Activated T-helper 1 cell treated with anti-CD3 and anti-CD28 coated beads, Interleukin-12 subunit alpha, Interleukin-12 subunit beta, Interleukin-2, Interleukin-4 antibody, amounts not matched to agents 30 ng/mL and 10 ng/mL and 1 ng/mL, durations not matched to agents 14 hours and 24 hours and 36 hours (primary cell): ENCODE measurements at regions of chr3 and their contacts with region 1.

Region 1: DNA sequence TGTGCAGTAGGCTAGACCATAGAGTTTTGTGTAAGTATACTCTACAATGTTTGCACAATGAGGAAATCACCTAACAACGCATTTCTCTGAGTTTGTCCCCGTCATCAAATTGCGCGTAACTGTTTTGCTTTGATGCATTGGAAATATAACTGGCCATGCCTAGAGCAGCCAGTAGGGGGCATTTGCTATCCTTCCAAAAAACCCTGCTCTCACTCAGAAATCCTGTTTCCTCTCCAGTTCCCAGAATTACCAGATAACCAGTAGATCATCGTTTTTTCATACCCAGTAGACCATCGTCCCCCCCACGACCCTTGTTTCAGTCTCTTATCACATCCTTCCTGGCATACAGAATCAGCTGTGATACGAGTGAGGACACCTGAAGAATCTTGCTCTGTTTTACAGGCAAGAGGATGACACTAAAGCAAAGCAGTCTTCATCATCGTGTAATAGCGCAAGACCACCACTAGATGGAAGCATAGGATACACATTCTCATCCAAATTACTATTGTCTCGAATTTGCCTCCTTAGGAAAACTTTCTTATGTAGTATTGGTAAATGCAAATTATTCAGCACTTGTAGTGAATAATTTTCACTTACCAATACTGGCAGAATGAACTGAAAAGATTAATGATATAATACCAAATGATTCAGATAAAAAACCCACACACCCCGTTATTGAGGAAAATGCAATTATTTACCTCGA is 4.4 kb upstream of the GABRR3 start:
- DNase-seq: peak; percentile 71
- H3K4me3 Mint-ChIP-seq: peak overlapping the region; percentile 84
- H3K27ac Mint-ChIP-seq: peak overlapping the region; percentile 90
- H3K4me1 Mint-ChIP-seq: peaks cover 22% of the 10 kb centered on the region
- H3K27me3 Mint-ChIP-seq: peaks cover 27% of the 10 kb centered on the region

Region 2: DNA sequence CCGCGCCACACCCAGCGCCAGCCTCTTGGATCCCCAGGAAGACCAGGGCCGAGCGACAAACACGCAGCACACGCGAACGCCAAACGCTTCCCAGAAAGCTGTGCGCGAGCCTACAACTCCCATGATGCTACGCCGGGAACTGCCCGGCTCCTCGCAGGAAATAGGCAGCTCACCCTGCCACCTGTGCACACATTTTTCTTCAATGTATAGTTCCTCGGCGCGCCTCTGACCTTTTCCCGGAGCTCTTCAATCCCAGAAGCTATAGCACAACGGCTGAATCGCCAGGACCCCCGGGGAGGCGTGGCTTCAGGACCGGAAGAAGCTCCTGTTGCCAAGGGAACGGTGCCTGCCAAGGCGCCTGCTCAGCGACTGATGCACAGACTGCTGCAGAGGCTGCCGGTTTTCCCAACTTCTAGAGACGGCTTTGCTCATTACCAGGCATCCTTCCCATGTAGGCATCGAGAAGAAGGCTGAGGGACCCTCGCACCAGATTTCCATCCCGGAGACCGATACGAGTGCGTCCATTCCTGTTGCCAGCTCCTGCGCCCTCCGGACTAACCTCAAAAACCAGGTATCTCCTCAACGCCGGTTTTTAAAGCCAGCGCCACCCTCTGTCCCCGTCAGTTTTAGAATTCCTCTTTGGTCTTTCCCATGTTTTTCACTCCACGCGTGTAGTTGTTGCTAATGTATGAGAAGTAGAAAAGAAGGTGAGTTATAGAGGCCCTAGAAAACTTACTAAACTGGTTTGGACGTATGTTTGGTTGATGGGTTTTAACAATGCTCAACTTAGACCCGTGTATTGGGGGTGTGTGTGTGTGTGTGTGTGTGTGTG is 274.9 kb before region 1 on chr3 and contains the start of gene ARL6:
- intact Hi-C with region 1: loop called (anchors 1 kb)
- DNase-seq: peak; percentile 66
- H3K4me3 Mint-ChIP-seq: peak within 1 kb of the TSS; percentile 96
- H3K27ac Mint-ChIP-seq: peak within 1 kb of the TSS; percentile 95
- H3K4me1 Mint-ChIP-seq: peaks cover 31% of the 10 kb centered on the region
- H3K27me3 Mint-ChIP-seq: peaks cover 3% of the 10 kb centered on the region
- total RNA-seq, gene ARL6: 5.9 and 6.2 TPM in 2 replicates

Region 3: DNA sequence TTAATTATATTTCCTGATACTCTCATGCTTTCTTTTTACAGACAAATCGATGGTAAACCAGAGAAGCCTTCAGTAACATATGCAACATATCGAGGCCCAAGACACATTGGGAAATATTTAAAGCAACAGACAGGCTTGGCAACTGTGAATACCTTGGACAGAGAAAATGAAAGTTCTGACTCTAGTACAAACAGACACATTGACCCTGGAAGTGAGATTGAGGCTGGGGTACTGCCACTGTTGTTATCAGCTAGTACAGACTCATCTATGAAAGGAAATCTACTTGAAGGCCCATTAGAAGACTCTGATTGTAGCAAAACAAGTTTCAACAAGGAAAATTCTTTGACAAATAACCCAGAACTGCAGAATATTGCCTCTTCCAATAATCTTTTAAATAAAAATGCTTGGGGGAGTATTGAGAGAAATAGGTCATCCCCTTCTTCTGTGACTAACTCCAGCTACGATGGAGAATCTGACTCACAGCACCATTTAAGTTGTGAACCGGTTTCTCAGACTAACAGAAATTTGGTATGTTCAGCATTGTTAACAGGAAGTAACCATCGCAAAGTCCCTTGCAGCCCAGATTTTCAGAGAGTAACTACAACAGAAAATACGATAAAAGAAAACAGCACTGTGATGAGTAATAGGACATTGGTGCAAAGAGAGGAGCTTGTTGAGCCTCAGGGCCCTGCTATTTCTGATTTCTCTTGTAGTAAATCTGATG is 167.5 kb before region 1 on chr3:
- intact Hi-C with region 1: loop called (anchors 1 kb)
- DNase-seq: peak; percentile 32
- H3K4me3 Mint-ChIP-seq: peak overlapping the region; percentile 59
- H3K27ac Mint-ChIP-seq: peak overlapping the region; percentile 88
- H3K4me1 Mint-ChIP-seq: peaks cover 27% of the 10 kb centered on the region
- H3K27me3 Mint-ChIP-seq: peaks cover 2% of the 10 kb centered on the region

Region 4: DNA sequence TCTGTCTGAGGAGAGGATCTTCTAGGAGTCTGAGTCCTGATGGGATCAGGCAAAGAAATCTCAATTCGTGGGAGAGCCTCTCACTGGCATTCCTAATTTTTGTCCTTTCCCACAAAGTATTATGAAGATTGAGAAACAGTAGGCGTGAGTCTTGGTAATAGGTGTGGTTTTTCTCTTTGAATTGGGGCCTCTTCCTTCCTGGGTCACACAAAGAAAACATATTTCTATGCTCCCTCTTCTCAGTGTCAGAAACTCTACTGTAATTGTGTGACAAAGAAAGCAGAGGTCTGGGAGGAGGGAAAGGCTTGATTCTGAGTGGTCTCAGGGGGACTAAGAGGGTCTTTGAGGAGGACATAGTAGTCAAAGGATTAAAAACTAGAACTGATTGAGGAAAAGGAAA is 10.4 kb before region 1 on chr3:
- intact Hi-C with region 1: loop called (anchors 1 kb)
- DNase-seq: no peak
- H3K4me3 Mint-ChIP-seq: peak overlapping the region; percentile 51
- H3K27ac Mint-ChIP-seq: peak overlapping the region; percentile 86
- H3K4me1 Mint-ChIP-seq: peaks cover 37% of the 10 kb centered on the region
- H3K27me3 Mint-ChIP-seq: peaks cover 2% of the 10 kb centered on the region

Region 5: DNA sequence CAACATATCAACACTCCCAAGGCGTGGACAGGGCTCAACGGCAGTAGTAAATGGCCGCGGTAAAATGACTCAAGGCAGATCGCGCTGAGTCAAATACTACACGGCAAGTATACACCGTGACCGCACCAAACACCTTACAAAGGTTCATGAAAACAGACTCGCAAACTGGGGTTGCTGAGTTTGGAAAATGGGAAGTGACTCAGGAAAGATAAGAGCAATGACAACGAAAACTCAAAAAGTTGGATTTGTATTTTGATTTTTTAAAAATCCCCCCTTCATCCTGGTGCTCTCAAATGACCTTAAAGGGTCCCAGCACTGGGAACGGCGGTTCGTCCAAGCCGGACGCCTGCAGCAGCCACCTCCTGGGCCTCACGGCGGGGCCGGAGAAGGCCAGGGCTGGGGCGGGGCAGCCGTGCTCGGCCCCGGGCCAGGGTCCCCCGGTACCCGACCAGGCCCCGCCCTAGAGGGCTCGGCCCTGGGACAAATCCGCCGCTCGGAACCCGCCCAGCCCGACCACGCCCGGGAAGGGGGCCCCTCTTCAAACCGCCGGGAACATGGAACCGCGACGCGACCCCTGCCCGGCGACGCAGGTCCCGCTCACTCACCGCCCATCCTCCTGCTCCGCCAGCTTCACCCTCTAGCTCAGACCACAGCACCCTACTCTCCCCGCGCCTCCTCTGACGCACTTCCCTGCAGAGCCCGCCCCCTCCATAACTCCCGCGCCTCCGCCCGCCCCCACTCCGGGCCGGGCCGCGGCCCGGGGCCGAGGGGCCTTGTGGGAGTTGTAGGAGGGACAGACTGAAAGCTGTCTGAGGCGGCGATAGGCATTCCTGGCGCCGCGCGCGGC is 483.0 kb after region 1 on chr3 and contains the start of gene CLDND1:
- intact Hi-C with region 1: loop called (anchors 1 kb)
- DNase-seq: peak; percentile 95
- H3K4me3 Mint-ChIP-seq: peak within 1 kb of the TSS; percentile 97
- H3K27ac Mint-ChIP-seq: peak within 1 kb of the TSS; percentile 95
- H3K4me1 Mint-ChIP-seq: peaks cover 77% of the 10 kb centered on the region
- H3K27me3 Mint-ChIP-seq: no peaks in the 10 kb centered on the region
- total RNA-seq, gene CLDND1: 314 and 328 TPM in 2 replicates

Region 6: GRCh38 chr3:98593046-98593936 is 553.8 kb after region 1 on chr3 and contains the start of gene CPOX:
- intact Hi-C with region 1: loop called (anchors 1 kb)
- DNase-seq: peak; percentile 84
- H3K4me3 Mint-ChIP-seq: peak within 1 kb of the TSS; percentile 95
- H3K27ac Mint-ChIP-seq: peak within 1 kb of the TSS; percentile 95
- H3K4me1 Mint-ChIP-seq: peaks cover 63% of the 10 kb centered on the region
- H3K27me3 Mint-ChIP-seq: no peaks in the 10 kb centered on the region
- total RNA-seq, gene CPOX: 42.2 and 47.4 TPM in 2 replicates

Region 7: DNA sequence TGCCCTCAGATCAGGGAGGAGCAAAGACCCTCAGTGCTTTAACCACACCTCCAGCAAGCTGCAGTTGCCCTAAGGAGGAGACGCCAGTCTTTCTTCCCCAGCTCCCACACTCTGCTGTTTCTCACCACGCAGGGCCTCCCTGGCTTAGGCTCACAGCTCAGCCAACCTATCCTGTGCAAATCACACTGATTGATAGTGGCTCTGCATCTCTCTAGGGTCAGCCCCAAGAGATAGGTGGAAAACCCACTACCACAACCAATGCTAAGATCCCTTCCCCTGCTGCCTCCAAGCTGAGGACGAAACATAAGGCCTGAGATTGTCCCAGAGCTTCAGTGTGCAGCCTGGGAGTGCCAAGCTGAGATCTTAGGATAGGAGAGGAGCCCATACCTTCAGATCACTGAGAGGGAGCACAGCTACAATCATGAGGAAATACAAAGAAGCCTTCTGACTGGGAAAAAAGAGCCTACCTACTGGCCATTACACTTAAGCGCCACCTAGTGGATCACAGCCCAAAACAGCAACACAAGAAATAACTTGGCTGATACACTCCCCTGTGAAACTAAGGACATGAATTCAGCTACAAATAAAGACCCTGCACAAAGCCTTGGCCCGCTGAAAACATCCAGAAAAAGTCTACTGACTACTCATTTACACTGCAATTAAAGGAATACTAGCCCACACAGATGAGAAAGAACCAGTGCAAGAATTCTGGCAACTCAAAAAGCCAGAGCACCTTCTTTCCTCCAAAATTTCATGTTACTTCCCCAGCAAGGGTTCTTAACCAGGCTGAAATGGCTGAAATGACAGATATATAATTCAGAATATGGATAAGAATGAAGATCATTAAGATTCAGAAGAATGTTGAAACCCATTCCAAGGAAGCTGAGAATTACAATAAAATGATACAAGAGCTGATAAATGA is 1133.5 kb after region 1 on chr3:
- intact Hi-C with region 1: loop called (anchors 2 kb)
- DNase-seq: no peak
- H3K4me3 Mint-ChIP-seq: no peak overlapping the region
- H3K27ac Mint-ChIP-seq: no peak overlapping the region
- H3K4me1 Mint-ChIP-seq: no peaks in the 10 kb centered on the region
- H3K27me3 Mint-ChIP-seq: peaks cover 3% of the 10 kb centered on the region